GM12878 (cell line): ENCODE measurements at regions of chr17 and their contacts with region 1.

Region 1: DNA sequence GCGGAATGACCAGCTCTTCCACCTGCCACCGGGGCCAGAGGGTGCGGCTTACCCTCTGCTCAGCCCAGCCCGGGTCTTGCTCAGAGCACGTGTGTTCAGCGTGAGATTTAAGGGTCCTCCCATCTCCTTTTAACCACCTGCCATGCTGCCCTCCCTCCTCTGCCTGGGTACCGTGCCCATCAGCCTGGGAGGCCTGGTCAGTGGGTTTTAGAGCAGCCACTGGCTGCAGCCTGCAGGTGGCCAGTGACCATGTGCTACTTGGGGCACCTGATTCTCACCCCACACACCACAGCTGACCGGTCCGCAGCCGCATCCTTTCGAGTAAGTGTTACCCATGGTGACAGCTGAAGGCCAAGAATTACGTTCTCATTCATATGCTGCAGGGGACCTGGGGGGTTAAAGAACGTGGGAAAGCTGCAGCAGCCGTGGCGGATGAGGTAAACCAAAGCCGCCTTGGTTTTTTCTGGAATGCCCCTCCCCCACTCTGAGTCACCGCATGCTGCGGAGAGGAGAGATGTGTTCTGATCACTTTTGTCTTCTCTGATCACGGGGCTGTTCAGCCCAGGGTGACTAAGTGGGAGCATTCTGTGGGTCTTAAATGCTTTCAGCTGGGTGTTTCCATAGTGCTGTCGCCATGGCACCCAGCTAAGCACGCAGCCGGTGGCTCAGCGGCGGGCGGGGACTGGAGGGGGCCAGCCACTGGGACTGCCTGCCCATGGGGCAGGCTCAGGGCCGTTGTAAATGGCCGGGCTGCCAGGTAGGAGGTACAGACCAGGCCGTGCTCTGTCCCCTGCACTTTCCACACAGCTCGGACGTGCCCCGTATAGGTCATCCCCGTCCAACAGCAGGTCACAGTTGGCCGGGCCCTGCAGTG is 59.8 kb downstream of the BAIAP2 start:
- DNase-seq: peak; percentile 21
- ATAC-seq: peak; percentile 83
- H3K4me3 ChIP-seq: no peak overlapping the region
- H3K27ac ChIP-seq: no peak overlapping the region
- H3K4me1 ChIP-seq: peaks cover 11% of the 10 kb centered on the region
- H3K27me3 ChIP-seq: peaks cover 0 to 7% of the 10 kb centered on the region in 2 experiments; a peak in 3 of 4 replicates
- CTCF ChIP-seq: no peak
- EP300 ChIP-seq: peak in 1 of 2 experiments; percentile 23; a peak in 1 of 4 replicates
- POLR2A ChIP-seq: no peak
- RAD21 ChIP-seq: no peak

Region 2: DNA sequence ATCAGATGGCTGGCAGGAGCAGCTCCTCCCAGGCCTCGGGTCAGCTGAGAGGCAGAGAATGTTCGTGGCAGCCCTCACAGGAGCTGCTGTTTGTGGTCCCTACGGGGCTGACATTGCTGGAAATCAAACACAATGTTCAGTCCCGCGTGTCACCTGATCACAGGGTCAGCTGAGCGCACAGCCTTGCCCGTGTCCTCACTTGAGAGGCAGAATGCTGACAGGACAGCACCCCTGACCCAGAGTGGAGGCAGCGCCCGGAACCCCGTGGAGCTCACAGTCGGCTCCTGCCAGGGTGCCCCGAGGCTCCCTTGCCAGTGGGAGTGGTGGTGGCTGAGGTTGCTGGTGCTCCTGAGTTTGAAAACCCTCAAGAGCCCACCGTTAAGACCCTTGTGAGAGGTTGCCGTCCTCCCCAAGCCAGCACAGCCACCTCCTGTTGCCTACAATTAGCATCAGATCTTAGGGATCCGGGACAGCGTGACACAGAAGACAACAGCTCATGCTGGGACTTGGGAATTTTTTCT is 106.7 kb before region 1 on chr17:
- CTCF ChIA-PET with region 1: interaction called, 10 read pairs
- POLR2A ChIA-PET with region 1: no interaction called
- RAD21 ChIA-PET with region 1: no interaction called
- SMC1A ChIA-PET with region 1: no interaction called
- in situ Hi-C with region 1: no loop called
- intact Hi-C with region 1: no loop called
- DNase-seq: no peak
- ATAC-seq: no peak
- H3K4me3 ChIP-seq: no peak overlapping the region
- H3K27ac ChIP-seq: no peak overlapping the region
- H3K4me1 ChIP-seq: peaks cover 13% of the 10 kb centered on the region
- H3K27me3 ChIP-seq: no peaks in the 10 kb centered on the region; a peak in 1 of 4 replicates
- CTCF ChIP-seq: no peak
- EP300 ChIP-seq: no peak
- POLR2A ChIP-seq: no peak
- RAD21 ChIP-seq: no peak

Region 3: DNA sequence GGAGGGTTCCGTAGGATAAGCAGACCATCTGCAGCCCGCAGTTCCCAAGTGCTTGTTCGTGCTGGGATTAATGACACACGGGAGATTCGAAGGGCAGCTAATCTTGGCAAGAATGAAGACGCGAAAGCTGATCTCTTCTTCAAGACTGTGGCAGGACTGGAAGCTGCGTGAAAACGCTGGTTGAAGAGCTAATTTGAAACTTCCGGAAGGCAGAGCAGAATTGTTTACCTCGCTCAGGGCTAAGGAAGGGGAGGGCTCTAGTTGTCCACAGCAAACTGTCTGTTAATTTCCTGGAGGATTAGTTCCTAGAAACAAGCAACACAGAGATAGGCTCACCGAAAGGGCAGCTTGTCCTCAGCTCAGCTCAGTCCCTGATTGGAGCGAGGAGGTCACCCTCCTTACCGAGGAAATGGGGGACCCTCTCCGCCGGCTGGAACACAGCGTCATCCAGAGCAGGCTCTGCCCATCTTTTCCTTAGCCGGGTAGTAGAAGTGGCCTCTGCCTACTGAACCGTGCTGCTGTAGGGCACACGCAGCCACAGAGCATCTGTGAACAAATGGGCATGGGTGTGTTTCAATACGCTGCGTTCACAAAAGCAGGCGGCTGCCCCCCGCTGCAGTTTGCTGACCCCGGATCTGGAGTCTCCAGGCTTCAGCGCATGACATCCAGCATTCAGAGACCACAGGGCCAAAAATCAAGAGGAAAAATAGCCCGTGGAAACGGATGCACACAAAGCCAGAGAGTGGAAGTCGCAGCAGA is 76.5 kb before region 1 on chr17:
- CTCF ChIA-PET with region 1: interaction called, 60 read pairs
- POLR2A ChIA-PET with region 1: interaction called, 3 read pairs
- RAD21 ChIA-PET with region 1: interaction called, 19 read pairs
- SMC1A ChIA-PET with region 1: interaction called, 6 read pairs
- in situ Hi-C with region 1: loop called (anchors 10 kb)
- intact Hi-C with region 1: loop called (anchors 1 kb)
- DNase-seq: peak; percentile 4
- ATAC-seq: peak; percentile 56
- H3K4me3 ChIP-seq: peak overlapping the region; percentile 24; the same call in 1 of the 2 replicates
- H3K27ac ChIP-seq: no peak overlapping the region
- H3K4me1 ChIP-seq: no peaks in the 10 kb centered on the region
- H3K27me3 ChIP-seq: peaks cover 0 to 2% of the 10 kb centered on the region in 2 experiments; a peak in 1 of 4 replicates
- CTCF ChIP-seq: no peak
- EP300 ChIP-seq: no peak
- POLR2A ChIP-seq: no peak
- RAD21 ChIP-seq: no peak

Region 4: DNA sequence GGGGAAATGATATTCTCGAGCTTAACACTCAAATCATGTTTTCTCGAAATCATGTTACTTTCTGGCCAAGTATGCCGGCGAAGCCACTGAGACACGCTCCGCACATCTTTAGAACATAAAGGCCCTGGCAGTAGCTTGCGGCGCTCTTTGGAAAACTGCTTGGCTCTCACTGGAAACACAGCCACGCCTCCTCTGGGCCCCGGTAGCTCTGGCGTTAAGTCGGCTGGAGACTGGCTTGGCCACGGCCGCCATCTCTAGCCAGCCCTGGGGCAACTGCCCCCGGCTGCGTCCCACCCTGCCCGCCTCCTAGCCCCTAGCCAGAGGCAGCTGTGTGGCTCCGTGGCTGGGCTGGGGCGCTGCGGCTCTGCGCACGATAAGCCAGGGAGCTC is 69.0 kb before region 1 on chr17:
- CTCF ChIA-PET with region 1: interaction called, 60 read pairs
- POLR2A ChIA-PET with region 1: interaction called, 3 read pairs
- RAD21 ChIA-PET with region 1: interaction called, 19 read pairs
- SMC1A ChIA-PET with region 1: interaction called, 6 read pairs
- in situ Hi-C with region 1: loop called (anchors 10 kb)
- intact Hi-C with region 1: loop called (anchors 1 kb)
- DNase-seq: no peak
- ATAC-seq: no peak
- H3K4me3 ChIP-seq: no peak overlapping the region
- H3K27ac ChIP-seq: no peak overlapping the region
- H3K4me1 ChIP-seq: no peaks in the 10 kb centered on the region
- H3K27me3 ChIP-seq: no peaks in the 10 kb centered on the region; a peak in 2 of 4 replicates
- CTCF ChIP-seq: no peak
- EP300 ChIP-seq: no peak
- POLR2A ChIP-seq: no peak
- RAD21 ChIP-seq: no peak

Region 5: DNA sequence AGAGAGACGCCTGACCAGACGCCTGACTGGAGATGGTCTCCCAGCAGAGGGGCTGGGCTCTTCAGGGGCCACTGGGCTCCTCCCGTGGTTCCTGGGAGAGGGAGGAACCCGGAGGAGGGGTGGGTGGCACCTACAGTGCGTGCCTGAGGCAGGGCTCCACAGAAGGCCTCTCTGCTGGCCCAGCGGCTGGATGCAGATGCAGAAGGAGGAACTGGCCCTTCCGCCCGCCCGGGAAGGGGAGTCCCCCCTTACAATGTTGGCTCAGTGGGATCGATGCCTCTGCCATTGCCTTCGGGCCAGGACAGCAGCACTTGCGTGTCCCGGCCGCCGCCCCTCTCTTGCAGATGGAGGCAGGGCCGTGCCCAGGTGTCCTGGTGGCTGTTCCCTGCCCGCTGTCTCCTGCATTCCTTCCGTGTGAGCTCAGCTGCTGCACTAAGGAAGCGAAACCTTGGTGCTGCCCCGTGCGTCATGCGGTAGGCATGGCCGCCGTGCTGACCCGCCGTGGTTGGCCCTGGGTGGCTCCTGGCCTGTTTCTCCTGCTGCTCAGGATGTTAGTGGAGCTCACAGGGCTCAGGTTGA is 44.7 kb before region 1 on chr17:
- CTCF ChIA-PET with region 1: interaction called, 11 read pairs
- POLR2A ChIA-PET with region 1: no interaction called
- RAD21 ChIA-PET with region 1: interaction called, 3 read pairs
- SMC1A ChIA-PET with region 1: interaction called, 6 read pairs
- in situ Hi-C with region 1: no loop called
- intact Hi-C with region 1: no loop called
- DNase-seq: peak; percentile 21
- ATAC-seq: peak; percentile 88
- H3K4me3 ChIP-seq: 0 out of 2 replicates have a peak overlapping the region, but pooled peaks have one; percentile 11
- H3K27ac ChIP-seq: peak overlapping the region; percentile 61; the same call in 1 of the 2 replicates
- H3K4me1 ChIP-seq: peaks cover 22% of the 10 kb centered on the region
- H3K27me3 ChIP-seq: no peaks in the 10 kb centered on the region; a peak in 1 of 4 replicates
- CTCF ChIP-seq: no peak
- EP300 ChIP-seq: peak in 1 of 2 experiments; percentile 77; a peak in 2 of 4 replicates
- POLR2A ChIP-seq: no peak
- RAD21 ChIP-seq: no peak

Region 6: DNA sequence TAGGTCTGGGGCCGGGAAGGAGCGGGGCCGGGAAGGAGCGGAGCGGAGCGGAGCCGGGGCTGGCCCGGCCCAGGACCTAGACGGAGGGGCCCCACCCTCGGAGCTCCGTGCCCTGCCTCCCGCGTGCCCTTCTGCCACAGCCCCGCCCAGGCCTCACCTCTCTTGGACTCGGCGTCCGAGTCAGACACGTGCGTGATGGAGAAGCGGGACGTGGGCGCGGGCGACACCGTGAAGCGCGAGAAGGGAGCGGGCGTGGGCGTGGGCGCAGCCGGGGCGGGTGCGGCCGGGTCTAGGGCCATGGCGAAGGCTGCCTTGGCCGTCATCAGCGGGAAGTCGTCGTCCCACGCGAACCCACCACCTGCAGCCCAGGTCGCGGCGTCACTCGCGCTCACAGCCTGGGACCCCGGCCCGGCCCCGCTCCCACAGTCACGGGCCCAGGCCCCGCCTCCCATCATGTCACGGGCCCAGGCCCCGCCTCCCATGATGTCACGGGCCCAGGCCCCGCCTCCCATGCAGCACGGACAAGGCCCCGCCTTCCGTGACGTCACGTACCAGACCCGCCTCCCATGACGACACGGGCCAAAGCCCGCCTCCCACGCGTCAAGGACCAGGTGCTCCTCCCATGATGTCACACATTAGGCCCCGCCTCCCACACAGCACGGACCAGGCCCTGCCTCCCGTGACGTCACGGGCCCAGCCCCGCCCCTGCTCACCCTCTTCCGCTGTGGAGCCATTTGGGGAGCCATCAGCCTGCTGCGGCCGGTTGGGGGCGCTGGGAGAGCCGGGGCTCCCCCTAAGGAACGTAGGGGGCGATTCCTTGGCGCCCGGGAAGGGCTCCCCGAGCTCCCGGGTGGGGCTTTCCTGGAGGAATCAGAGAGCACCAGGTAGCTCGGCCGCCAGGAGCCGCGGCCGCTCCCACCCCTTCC is 24.7 kb after region 1 on chr17:
- CTCF ChIA-PET with region 1: no interaction called
- POLR2A ChIA-PET with region 1: no interaction called
- RAD21 ChIA-PET with region 1: no interaction called
- SMC1A ChIA-PET with region 1: no interaction called
- in situ Hi-C with region 1: no loop called
- intact Hi-C with region 1: no loop called
- DNase-seq: peak; percentile 32
- ATAC-seq: peak; percentile 72
- H3K4me3 ChIP-seq: no peak overlapping the region
- H3K27ac ChIP-seq: no peak overlapping the region
- H3K4me1 ChIP-seq: no peaks in the 10 kb centered on the region
- H3K27me3 ChIP-seq: no peaks in the 10 kb centered on the region; a peak in 1 of 4 replicates
- CTCF ChIP-seq: no peak
- EP300 ChIP-seq: no peak
- POLR2A ChIP-seq: no peak
- RAD21 ChIP-seq: no peak

Region 7: GRCh38 chr17:81153340-81153803 is 58.6 kb after region 1 on chr17:
- CTCF ChIA-PET with region 1: no interaction called
- POLR2A ChIA-PET with region 1: no interaction called
- RAD21 ChIA-PET with region 1: no interaction called
- SMC1A ChIA-PET with region 1: no interaction called
- in situ Hi-C with region 1: no loop called
- intact Hi-C with region 1: no loop called
- DNase-seq: no peak
- ATAC-seq: no peak
- H3K4me3 ChIP-seq: no peak overlapping the region
- H3K27ac ChIP-seq: no peak overlapping the region
- H3K4me1 ChIP-seq: no peaks in the 10 kb centered on the region
- H3K27me3 ChIP-seq: no peaks in the 10 kb centered on the region
- CTCF ChIP-seq: no peak
- EP300 ChIP-seq: no peak
- POLR2A ChIP-seq: no peak
- RAD21 ChIP-seq: no peak

Region 8: DNA sequence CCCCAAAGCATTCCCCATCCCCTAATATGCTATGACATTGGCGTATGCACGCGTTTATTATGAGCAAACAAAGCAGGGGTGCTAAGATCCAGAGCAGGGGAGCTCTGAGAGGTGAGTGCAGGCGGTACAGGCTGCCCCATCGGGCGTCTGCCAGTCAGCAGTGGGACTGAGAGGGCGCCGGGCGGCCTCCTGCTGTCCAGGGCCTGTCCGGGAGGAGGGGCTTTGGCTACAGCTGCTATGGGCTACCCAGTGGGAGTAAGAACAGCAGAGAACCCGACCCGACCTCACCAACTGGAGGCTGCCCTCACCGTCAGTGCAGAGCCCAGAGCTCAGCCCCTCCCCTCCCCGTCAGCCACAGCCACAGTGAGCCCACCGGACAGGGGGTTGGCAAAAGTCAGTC is 89.8 kb after region 1 on chr17:
- CTCF ChIA-PET with region 1: no interaction called
- POLR2A ChIA-PET with region 1: no interaction called
- RAD21 ChIA-PET with region 1: no interaction called
- SMC1A ChIA-PET with region 1: no interaction called
- in situ Hi-C with region 1: no loop called
- intact Hi-C with region 1: no loop called
- DNase-seq: no peak
- ATAC-seq: no peak
- H3K4me3 ChIP-seq: no peak overlapping the region
- H3K27ac ChIP-seq: no peak overlapping the region
- H3K4me1 ChIP-seq: no peaks in the 10 kb centered on the region
- H3K27me3 ChIP-seq: no peaks in the 10 kb centered on the region
- CTCF ChIP-seq: no peak
- EP300 ChIP-seq: no peak
- POLR2A ChIP-seq: no peak
- RAD21 ChIP-seq: no peak